Sciatic nerve (tissue), 2 donors: ENCODE measurements at regions of chr5 and their contacts with region 1.

Region 1: DNA sequence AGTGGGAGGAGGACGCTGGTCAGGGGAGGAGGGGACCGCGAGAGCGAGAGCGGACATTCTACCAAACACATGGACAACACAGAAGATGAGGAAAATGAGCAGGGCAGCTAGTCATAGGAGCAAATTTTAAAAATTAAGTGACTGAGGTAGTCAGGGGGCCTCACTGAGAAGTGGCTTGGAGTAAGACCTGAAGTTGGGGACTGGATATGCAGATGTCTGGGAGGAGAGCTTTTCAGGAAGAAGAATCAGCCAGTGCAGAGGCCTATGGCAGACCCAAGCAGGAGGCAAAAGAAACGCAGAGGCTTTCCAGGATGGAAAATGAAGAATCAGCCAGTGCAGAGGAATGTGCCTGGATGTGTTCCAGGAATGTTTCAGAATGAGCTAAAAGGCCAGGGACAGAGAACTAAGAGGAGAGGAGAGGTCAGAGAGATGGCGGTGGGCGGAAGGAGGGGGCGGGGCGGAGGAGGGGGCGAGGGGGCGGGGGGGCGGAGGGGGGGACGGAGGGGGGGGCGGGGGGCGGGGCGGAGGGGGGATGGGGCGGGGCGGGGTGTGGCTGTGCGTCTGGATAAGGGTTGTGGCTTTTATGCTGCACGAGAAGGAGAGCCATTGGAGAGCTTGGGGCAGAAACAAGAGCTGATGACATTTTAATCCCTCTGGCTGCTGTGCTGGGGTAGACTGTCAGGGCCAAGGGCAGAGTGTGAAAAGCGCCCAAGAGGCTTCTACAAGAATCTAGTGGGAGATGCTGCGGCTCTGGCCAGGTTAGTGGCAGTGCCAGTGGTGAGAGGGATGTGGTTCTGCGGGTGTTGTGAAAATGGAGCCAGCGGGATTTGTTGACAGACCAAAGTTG is 129.6 kb downstream of the KCNIP1 start:
- DNase-seq: peak; percentile 71
- ATAC-seq: peak; percentile 86

Region 2: GRCh38 chr5:170436335-170436734 is 197.1 kb before region 1 on chr5:
- intact Hi-C with region 1: loop called (anchors 2 kb)
- DNase-seq: no peak
- ATAC-seq: no peak

Region 3: DNA sequence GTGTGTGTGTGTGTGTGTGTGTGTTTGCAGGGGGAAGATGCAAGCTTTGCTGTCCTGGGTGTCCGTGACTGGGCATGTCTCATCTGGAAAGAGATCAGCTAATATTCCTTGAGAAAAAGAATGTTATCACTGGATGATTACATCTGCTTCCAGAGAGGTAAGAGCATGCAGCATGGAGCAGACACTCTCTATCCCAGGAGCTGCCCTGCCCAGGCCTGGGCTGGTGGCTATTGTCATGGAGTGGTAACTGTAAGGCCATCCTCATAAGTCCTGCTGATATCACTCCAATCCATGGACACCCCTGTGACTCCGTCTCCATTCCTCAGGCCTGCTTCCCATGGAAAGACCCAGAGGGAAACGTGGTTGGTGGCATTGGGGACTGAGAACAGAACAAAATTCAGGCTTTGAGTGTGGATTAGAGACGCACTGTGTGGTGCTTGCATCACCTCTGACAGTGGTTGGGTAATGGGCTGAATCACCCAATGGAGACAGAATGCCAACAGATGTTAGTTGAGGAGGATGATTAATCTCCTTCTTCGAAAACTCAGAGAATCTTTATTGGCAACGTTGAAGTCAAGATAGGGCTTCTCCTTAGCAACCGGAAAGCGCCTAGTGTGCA is 181.6 kb before region 1 on chr5:
- intact Hi-C with region 1: no loop called
- DNase-seq: no peak
- ATAC-seq: no peak

Region 4: GRCh38 chr5:170597109-170597751 is 36.2 kb before region 1 on chr5:
- intact Hi-C with region 1: no loop called
- DNase-seq: peak; percentile 68
- ATAC-seq: peak; percentile 88